Activated CD4-positive, alpha-beta memory T cell treated with anti-CD3 and anti-CD28 coated beads for 36 hours (primary cell): ENCODE measurements at regions of chr6 and their contacts with region 1.

Region 1: DNA sequence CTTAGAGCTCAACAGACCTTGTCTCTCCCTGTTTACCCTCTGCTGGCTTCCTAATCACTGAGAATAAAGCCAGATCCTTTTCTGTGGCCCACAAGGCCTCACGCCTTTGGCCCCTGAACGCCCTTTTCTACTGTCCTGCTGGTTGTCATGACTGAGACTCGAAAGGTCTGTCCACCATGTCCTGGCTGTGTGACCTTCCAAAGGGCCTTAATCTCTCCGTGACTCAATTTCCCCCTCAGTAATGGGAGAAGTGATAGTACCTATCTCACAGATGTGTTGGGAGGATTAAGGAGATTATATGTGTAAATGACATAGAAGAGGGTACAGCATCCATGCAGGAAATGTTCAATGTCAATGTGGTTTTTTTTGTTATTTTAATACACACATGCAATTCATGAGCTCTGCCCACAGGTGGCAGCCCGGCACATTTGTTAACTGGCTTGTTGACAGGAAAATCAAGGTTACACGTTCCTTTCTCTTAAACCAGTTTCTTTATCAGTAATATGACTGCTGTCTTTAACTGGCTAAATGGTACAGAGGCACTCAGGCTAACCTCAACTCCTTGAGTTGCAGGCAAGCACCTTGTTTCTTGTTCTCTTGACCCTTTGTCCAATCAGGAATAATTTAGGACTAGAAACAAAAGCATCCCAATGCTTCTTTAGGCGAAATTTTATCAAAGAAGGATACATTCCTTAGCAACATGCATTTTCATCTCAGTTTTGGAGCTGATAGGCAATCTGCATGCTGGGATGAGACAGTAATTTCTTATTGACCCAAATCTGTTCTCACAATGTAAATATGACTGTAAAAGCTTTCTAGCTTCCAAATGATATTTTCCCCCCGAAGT is 16.6 kb downstream of the SLC22A1 start:
- DNase-seq: peak; percentile 79
- H3K4me3 Mint-ChIP-seq: no peak overlapping the region
- H3K27ac Mint-ChIP-seq: no peak overlapping the region
- H3K4me1 Mint-ChIP-seq: peaks cover 19% of the 10 kb centered on the region
- H3K27me3 Mint-ChIP-seq: no peaks in the 10 kb centered on the region

Region 2: DNA sequence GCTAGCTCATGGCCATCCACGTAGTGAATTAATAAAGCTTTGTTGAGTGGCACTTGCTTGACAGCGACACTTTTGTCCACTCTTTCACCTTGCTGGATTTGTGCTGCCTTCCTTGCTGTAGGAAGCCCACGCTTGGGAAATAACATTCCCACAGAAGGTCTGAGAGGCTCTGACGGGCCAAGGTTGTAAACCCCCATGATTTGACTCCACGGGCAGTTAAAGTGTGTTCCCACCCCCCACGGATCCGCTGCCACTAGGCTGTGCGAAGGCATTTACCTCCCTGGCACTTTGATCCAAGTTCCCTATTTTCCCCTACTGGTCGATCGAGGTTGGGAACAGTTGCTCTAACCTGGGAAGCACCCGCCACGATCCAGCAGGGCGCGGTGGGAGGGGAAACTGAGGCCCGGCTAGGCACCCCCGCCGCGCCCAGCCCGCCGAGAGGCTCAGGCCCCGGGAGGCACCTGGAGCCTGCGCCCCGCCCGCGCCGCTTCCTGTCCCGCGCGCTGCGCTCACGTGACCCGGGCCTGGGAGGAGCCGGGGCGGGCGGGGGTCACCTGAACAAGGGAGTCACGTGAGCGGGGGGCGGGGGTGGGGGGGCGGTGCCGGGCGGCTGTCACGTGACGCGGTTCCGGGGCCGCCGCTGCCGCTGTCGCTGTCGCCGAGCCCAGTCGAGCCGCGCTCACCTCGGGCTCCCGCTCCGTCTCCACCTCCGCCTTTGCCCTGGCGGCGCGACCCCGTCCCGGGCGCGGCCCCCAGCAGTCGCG is 169.6 kb before region 1 on chr6 and contains the start of gene IGF2R:
- CTCF ChIA-PET with region 1: no interaction called
- POLR2A ChIA-PET with region 1: no interaction called
- intact Hi-C with region 1: no loop called
- DNase-seq: peak; percentile 95
- H3K4me3 Mint-ChIP-seq: peak within 1 kb of the TSS; percentile 92
- H3K27ac Mint-ChIP-seq: peak within 1 kb of the TSS; percentile 92
- H3K4me1 Mint-ChIP-seq: peaks cover 40% of the 10 kb centered on the region
- H3K27me3 Mint-ChIP-seq: no peaks in the 10 kb centered on the region
- total RNA-seq, gene IGF2R: 73.5 to 75.5 TPM

Region 3: GRCh38 chr6:160221423-160221822 is 83.2 kb after region 1 on chr6:
- CTCF ChIA-PET with region 1: interaction called, 10 read pairs
- POLR2A ChIA-PET with region 1: no interaction called
- intact Hi-C with region 1: loop called (anchors 1 kb)
- DNase-seq: no peak
- H3K4me3 Mint-ChIP-seq: no peak overlapping the region
- H3K27ac Mint-ChIP-seq: no peak overlapping the region
- H3K4me1 Mint-ChIP-seq: peaks cover 10% of the 10 kb centered on the region
- H3K27me3 Mint-ChIP-seq: peaks cover 18% of the 10 kb centered on the region

Region 4: DNA sequence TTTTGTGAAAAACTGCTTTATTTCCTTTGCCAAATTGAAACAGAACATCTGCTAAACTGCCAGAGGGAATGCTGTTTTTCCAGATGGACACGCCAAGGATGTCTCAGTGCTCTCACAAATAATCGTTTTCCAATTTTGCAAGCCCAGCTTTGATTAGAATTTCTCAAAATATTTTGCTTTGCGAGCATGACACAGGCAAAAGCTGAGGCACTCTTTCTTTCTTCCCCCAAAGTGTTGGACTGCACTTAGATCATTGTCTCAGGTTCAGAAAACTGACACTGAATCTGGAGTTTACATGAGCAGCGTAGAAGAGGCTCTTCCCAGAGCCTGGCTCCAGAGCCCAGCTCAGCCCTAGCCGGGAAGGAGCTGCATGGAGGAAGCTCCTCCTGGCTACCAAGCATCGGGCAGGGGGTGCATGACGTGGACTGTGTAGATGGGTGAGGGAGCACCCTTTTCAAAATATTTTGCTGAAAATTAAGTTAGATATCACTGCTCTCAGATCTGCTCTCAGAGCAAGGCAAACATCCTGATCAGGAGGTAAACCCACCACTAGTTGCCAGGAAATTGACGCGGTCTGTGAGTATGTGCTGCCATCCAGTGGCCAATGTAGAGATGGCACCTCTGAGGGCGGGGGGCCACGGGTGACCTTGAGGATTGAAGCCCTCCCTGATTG is 317.5 kb after region 1 on chr6:
- CTCF ChIA-PET with region 1: interaction called, 93 read pairs
- POLR2A ChIA-PET with region 1: no interaction called
- intact Hi-C with region 1: loop called (anchors 1 kb)
- DNase-seq: peak; percentile 78
- H3K4me3 Mint-ChIP-seq: no peak overlapping the region
- H3K27ac Mint-ChIP-seq: no peak overlapping the region
- H3K4me1 Mint-ChIP-seq: peaks cover 28% of the 10 kb centered on the region
- H3K27me3 Mint-ChIP-seq: peaks cover 7% of the 10 kb centered on the region

Region 5: DNA sequence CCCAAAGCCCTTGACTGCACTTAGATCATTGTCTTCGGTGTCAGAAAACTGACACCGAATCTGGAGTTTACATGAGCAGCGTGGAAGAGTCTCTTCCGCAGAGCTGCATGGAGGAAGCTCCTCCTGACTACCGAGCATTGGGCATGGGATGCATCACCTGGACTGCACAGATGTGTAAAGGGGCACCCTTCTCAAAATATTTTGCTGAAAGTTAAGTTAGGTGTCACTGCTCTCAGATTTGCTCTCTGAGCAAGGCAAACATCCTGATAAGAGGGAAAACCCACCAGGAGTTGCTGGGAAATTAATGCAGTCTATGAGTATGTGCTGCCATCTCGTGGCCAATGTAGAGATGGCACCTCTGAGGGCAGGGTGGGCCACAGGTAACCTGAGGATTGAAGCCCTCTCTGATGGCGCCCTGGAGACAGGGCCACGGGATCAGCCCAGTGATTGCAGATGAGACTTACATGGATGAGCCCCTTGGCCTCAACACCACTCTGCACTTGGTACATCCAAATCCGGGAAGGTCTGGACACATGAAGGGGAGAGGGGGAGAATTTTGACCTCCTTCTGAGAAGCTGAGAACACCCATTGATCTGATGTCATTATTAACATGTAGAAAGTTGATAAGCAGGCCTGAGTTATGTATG is 396.0 kb after region 1 on chr6:
- CTCF ChIA-PET with region 1: interaction called, 26 read pairs
- POLR2A ChIA-PET with region 1: no interaction called
- intact Hi-C with region 1: no loop called
- DNase-seq: peak; percentile 69
- H3K4me3 Mint-ChIP-seq: no peak overlapping the region
- H3K27ac Mint-ChIP-seq: no peak overlapping the region
- H3K4me1 Mint-ChIP-seq: no peaks in the 10 kb centered on the region
- H3K27me3 Mint-ChIP-seq: no peaks in the 10 kb centered on the region

Region 6: DNA sequence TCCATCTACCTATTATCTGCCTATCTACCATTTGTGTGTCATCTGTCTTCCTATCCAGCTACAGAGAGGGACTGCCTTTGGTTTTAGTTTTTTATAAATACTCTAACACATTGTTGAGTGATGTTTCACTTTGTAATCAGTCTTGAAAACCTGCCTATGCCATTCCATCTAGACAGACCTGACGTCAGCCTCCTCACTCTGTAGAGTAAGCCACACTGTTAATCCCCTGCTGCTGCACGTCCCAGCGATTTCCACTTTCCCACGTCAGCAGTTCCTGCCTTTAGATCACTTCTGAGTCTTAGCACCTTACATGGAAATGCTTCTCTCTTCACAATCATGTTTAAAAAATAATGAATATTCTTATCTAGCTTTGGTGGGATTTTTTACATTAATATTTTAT is 618.7 kb after region 1 on chr6:
- CTCF ChIA-PET with region 1: no interaction called
- POLR2A ChIA-PET with region 1: no interaction called
- intact Hi-C with region 1: no loop called
- DNase-seq: no peak
- H3K4me3 Mint-ChIP-seq: no peak overlapping the region
- H3K27ac Mint-ChIP-seq: no peak overlapping the region
- H3K4me1 Mint-ChIP-seq: no peaks in the 10 kb centered on the region
- H3K27me3 Mint-ChIP-seq: peaks cover 22% of the 10 kb centered on the region